Head of caudate nucleus (tissue), 42 donors: ENCODE measurements at regions of chrX and their contacts with region 1.

Region 1: DNA sequence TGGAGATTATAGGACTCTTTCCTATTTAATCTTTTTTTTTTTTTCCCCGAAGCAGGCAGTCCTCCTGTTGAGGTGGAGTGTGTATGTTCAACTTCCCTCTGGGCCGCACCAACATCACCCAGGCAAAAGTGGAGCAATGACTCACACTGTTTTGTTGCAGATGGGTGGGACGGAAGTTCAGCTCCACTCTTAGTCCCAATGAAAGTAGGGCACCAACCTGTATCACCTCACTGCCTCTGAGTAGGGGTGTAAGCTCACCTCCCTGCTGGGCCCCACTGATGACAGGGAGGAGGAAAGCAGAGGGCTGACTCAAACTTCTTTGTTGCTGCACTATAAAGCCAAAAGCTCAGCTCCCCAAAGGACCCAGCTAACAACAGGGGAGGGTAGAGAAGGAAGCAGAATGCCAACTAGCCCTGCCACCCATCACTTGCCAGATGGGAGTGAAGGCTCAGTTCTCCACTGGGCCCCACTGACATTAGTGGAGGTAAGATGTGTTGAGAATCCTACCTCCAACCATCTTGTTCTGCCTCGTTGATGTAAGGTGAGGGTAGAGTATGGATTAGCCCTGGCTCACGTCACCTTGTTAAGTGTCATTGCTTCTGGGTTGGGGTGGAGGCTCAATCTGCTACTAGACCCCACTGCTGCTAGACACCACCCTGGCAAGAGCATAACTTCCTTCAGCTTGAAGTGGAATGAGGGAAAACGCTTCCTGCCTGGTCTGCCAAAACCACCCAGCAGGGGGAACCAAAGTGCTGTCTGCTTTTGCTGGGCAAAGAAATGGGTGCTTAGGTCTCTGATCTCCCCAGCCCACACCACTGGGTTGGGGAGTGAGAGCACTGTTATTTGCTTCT is 14.1 kb downstream of the RPS6KA3 start:
- DNase-seq: peak in 35 of 42 donors; percentile 4 to 66 (median 31)

Region 2: DNA sequence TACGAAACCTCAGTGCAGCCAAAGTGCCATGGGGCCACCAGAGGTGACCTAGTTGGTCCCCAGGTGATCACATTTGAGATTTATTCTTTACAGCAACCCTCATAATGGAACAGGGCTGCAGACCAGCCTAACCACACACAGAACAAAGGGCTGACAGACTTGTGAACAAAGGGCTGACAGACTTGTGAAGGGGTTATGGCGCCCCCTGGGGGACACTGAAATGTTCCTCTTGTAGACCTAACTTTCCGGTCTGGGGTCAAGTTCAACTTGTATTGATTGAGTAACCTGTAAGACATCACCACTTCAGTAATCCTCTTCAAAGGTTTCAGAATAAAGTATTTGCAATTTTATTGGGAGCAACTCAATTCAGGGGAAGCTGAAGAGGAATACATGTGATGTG is 190.0 kb after region 1 on chrX:
- intact Hi-C with region 1: loop called (anchors 5 kb)
- DNase-seq: peak; percentile 54 to 92 (median 80)